Activated B cell treated with CpG ODN at 0.5 μM for 24 hours (primary cell): ENCODE measurements at regions of chr17 and their contacts with region 1.

Region 1: GRCh38 chr17:73156166-73156840 is 8.5 kb upstream of the SSTR2 start:
- DNase-seq: peak; percentile 41
- ATAC-seq: peak; percentile 84
- H3K4me3 Mint-ChIP-seq: no peak overlapping the region
- H3K27ac Mint-ChIP-seq: no peak overlapping the region
- H3K4me1 Mint-ChIP-seq: peaks cover 17% of the 10 kb centered on the region
- H3K27me3 Mint-ChIP-seq: peaks cover 32% of the 10 kb centered on the region
- CTCF ChIP-seq: no peak

Region 2: GRCh38 chr17:72985881-72986720 is 170.2 kb before region 1 on chr17:
- CTCF ChIA-PET with region 1: interaction called, 42 read pairs
- POLR2A ChIA-PET with region 1: no interaction called
- intact Hi-C with region 1: loop called (anchors 1 kb)
- DNase-seq: no peak
- ATAC-seq: peak; percentile 52
- H3K4me3 Mint-ChIP-seq: no peak overlapping the region
- H3K27ac Mint-ChIP-seq: no peak overlapping the region
- H3K4me1 Mint-ChIP-seq: no peaks in the 10 kb centered on the region
- H3K27me3 Mint-ChIP-seq: no peaks in the 10 kb centered on the region
- CTCF ChIP-seq: peak; percentile 55

Region 3: DNA sequence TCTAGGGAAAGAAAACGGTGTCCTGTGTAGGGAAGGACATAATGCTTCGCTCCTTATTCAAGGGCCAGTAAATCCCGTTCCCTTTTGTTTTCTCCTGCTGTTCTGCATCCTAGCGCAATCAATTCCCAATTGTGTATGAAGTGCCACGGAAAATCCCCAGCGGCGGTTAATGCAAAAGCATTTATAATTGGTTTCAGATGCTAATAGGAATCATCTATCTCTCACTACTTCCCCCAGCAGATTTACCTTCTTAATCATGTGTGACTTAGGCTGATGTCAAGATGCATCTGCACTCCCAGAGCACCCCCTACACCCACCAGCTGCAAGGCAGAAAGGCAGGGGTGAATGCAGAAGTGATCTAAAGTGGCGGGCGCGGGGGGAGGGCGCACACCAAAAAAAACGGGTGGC is 24.2 kb before region 1 on chr17:
- CTCF ChIA-PET with region 1: interaction called, 4 read pairs
- POLR2A ChIA-PET with region 1: no interaction called
- intact Hi-C with region 1: loop called (anchors 1 kb)
- DNase-seq: peak; percentile 18
- ATAC-seq: peak; percentile 98
- H3K4me3 Mint-ChIP-seq: peak overlapping the region; percentile 44
- H3K27ac Mint-ChIP-seq: peak overlapping the region; percentile 14
- H3K4me1 Mint-ChIP-seq: peaks cover 19% of the 10 kb centered on the region
- H3K27me3 Mint-ChIP-seq: peaks cover 3% of the 10 kb centered on the region
- CTCF ChIP-seq: no peak